PC-9 (cell line): ENCODE measurements at regions of chr13 and their contacts with region 1.

Region 1: GRCh38 chr13:61954092-61954491 is 538.4 kb upstream of the PCDH20 start:
- DNase-seq: no peak
- H3K4me3 ChIP-seq: no peak overlapping the region
- H3K27ac ChIP-seq: no peak overlapping the region
- H3K4me1 ChIP-seq: no peaks in the 10 kb centered on the region
- H3K27me3 ChIP-seq: no peaks in the 10 kb centered on the region
- CTCF ChIP-seq: peak; percentile 55

Region 2: DNA sequence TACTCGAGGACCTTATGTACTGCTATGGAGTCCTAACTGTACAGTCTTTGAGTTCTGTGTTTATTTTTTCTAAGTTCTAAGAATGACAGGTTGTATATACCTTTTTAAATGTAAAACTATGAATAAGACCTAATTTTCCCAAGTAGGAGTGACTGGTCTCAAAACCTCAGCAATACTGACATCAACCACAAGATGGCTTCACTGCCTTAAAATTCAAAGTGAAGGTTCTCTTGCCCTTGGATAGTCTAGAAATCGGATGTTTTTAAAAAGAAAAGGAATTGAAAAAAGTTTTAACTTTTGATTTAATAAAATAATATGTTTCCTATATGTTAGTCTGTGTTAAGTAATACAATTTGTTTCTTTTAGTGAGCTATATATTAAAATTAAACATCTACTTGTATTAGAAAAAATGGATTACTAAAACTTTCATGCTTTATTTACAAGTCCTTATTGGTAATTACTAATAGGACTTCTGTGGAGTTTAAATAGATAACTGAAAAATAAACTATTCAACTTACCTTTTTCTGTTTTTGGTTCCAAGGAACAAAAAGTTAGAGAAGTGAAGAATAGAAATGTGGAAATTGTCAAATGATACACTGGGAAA is 1505.1 kb before region 1 on chr13:
- CTCF ChIA-PET with region 1: interaction called, 4 read pairs
- POLR2A ChIA-PET with region 1: no interaction called
- intact Hi-C with region 1: loop called (anchors 10 kb)
- DNase-seq: peak; percentile 3 to 58
- H3K4me3 ChIP-seq: no peak overlapping the region
- H3K27ac ChIP-seq: no peak overlapping the region
- H3K4me1 ChIP-seq: no peaks in the 10 kb centered on the region
- H3K27me3 ChIP-seq: no peaks in the 10 kb centered on the region
- CTCF ChIP-seq: peak; percentile 84

Region 3: DNA sequence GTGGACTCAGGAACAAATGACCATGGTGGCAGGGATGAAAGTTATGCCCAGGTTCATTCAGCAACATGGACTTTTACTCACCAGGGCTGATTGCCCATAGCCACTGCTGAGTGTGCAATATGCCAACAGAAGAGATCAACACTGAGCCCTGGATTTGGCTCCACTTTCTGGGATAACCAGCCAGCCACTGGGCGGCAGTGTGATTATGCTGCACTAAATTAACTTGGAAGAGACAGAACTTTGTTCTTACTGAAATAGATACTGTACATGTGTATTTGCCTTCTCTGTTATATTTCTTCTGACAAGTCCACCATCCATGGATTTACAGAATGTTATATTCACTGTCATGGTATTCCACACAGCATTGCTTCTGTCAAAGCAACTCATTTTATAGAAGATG is 1299.7 kb before region 1 on chr13:
- CTCF ChIA-PET with region 1: no interaction called
- POLR2A ChIA-PET with region 1: no interaction called
- intact Hi-C with region 1: loop called (anchors 10 kb)
- DNase-seq: peak in 1 of 2 experiments; percentile 10
- H3K4me3 ChIP-seq: no peak overlapping the region
- H3K27ac ChIP-seq: no peak overlapping the region
- H3K4me1 ChIP-seq: no peaks in the 10 kb centered on the region
- H3K27me3 ChIP-seq: no peaks in the 10 kb centered on the region
- CTCF ChIP-seq: peak; percentile 40; the same call in 1 of the 2 replicates

Region 4: DNA sequence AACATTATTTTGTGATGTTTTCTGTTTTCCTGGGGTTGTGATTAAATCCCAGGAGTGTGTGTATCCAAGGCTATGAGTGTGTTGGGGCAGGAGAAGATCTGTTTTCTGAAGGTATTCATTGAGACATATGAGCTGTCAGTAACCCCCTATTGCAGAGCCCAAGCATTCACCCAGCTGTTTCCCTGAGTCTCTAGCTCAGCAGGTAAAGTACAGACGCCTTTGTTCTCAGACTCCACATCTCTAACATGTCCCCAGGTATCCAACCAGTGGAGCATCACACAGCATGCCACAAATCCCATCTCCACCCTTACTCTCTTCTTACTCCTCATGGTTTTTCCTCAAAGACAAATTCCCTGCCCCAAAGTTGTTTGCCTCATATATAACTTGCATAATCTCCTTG is 752.0 kb before region 1 on chr13:
- CTCF ChIA-PET with region 1: no interaction called
- POLR2A ChIA-PET with region 1: interaction called, 12 read pairs
- intact Hi-C with region 1: no loop called
- DNase-seq: no peak
- H3K4me3 ChIP-seq: no peak overlapping the region
- H3K27ac ChIP-seq: no peak overlapping the region
- H3K4me1 ChIP-seq: no peaks in the 10 kb centered on the region
- H3K27me3 ChIP-seq: no peaks in the 10 kb centered on the region
- CTCF ChIP-seq: no peak

Region 5: GRCh38 chr13:61286148-61286745 is 667.8 kb before region 1 on chr13:
- CTCF ChIA-PET with region 1: no interaction called
- POLR2A ChIA-PET with region 1: no interaction called
- intact Hi-C with region 1: loop called (anchors 5 kb)
- DNase-seq: peak in 1 of 2 experiments; percentile 9
- H3K4me3 ChIP-seq: no peak overlapping the region
- H3K27ac ChIP-seq: no peak overlapping the region
- H3K4me1 ChIP-seq: no peaks in the 10 kb centered on the region
- H3K27me3 ChIP-seq: no peaks in the 10 kb centered on the region
- CTCF ChIP-seq: peak; percentile 50

Region 6: GRCh38 chr13:61410669-61411297 is 543.3 kb before region 1 on chr13:
- CTCF ChIA-PET with region 1: no interaction called
- POLR2A ChIA-PET with region 1: no interaction called
- intact Hi-C with region 1: loop called (anchors 2 kb)
- DNase-seq: no peak
- H3K4me3 ChIP-seq: no peak overlapping the region
- H3K27ac ChIP-seq: no peak overlapping the region
- H3K4me1 ChIP-seq: no peaks in the 10 kb centered on the region
- H3K27me3 ChIP-seq: peaks cover 4% of the 10 kb centered on the region
- CTCF ChIP-seq: no peak; the same call in none of the 2 replicates

Region 7: GRCh38 chr13:62046512-62046911 is 92.4 kb after region 1 on chr13:
- CTCF ChIA-PET with region 1: no interaction called
- POLR2A ChIA-PET with region 1: no interaction called
- intact Hi-C with region 1: no loop called
- DNase-seq: no peak
- H3K4me3 ChIP-seq: no peak overlapping the region
- H3K27ac ChIP-seq: no peak overlapping the region
- H3K4me1 ChIP-seq: no peaks in the 10 kb centered on the region
- H3K27me3 ChIP-seq: no peaks in the 10 kb centered on the region
- CTCF ChIP-seq: no peak

Region 8: DNA sequence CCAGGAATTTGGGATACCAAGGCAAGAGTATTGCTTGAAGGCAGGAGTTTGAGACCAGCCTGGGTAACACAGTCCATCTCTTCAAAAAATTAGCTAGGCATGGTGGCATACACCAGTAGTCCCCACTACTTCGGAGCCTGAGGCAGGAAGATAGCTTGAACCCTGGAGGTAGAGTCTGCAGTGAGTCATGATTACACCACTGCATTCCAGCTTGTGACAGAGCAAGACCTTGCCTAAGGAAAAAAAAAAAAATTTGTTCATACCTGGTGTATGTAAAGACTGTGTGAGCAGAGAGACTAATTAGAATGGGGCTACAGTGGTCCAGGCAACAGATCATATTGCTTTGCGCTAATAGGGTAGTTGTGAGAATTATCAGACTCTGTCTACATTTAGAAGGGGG is 239.8 kb after region 1 on chr13:
- CTCF ChIA-PET with region 1: no interaction called
- POLR2A ChIA-PET with region 1: no interaction called
- intact Hi-C with region 1: no loop called
- DNase-seq: no peak
- H3K4me3 ChIP-seq: no peak overlapping the region
- H3K27ac ChIP-seq: no peak overlapping the region
- H3K4me1 ChIP-seq: no peaks in the 10 kb centered on the region
- H3K27me3 ChIP-seq: no peaks in the 10 kb centered on the region
- CTCF ChIP-seq: no peak

Region 9: DNA sequence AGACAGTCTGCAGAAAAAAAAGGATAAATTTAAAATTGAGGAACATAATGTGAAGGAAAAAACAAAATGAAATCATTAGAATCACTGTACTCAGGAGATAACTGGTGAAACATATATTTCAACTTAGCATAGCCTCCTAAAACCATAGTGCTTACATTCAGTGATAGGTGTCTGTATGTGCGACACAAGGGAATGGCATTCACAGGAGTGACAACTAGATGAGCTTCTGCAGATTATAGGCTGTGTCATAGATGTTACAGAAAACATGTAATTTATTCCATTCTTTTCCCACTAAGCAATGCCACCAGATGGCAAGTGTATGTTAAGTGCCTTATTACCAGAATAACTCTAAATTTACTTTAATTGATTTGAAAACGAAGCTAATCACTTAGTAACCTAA is 421.6 kb after region 1 on chr13:
- CTCF ChIA-PET with region 1: no interaction called
- POLR2A ChIA-PET with region 1: no interaction called
- intact Hi-C with region 1: no loop called
- DNase-seq: no peak
- H3K4me3 ChIP-seq: no peak overlapping the region
- H3K27ac ChIP-seq: no peak overlapping the region
- H3K4me1 ChIP-seq: no peaks in the 10 kb centered on the region
- H3K27me3 ChIP-seq: no peaks in the 10 kb centered on the region
- CTCF ChIP-seq: no peak